Panc1 (cell line): ENCODE measurements at regions of chr15 and their contacts with region 1.

Region 1: GRCh38 chr15:93900476-93901400 is 330.6 kb upstream of the MCTP2 start:
- DNase-seq: no peak
- ATAC-seq: no peak
- H3K4me3 ChIP-seq: no peak overlapping the region
- H3K27ac ChIP-seq: no peak overlapping the region
- H3K4me1 ChIP-seq: no peaks in the 10 kb centered on the region
- H3K27me3 ChIP-seq: no peaks in the 10 kb centered on the region
- CTCF ChIP-seq: no peak

Region 2: GRCh38 chr15:93730724-93731123 is 170.0 kb before region 1 on chr15:
- CTCF ChIA-PET with region 1: no interaction called
- POLR2A ChIA-PET with region 1: no interaction called
- in situ Hi-C with region 1: no loop called
- intact Hi-C with region 1: no loop called
- DNase-seq: no peak
- ATAC-seq: no peak
- H3K4me3 ChIP-seq: no peak overlapping the region
- H3K27ac ChIP-seq: no peak overlapping the region
- H3K4me1 ChIP-seq: no peaks in the 10 kb centered on the region
- H3K27me3 ChIP-seq: no peaks in the 10 kb centered on the region
- CTCF ChIP-seq: no peak

Region 3: DNA sequence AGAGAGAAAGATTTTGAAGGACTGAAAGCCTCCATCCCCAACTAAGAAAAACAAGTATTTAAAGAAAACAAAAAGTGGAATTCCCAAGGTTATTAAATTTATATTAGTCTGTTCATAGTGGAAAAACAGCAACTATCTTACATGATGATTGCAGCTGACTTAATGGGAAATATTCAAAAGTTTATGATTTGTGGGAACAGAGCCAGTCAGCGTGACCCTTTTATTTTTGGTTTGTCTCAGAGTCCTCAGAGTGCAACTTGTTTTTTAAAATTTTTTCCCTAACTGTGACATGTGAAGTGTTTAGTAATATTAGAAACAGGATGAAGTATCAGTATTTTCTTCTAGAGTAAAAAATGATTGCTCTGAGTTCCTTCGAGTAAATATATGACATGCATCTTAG is 111.3 kb before region 1 on chr15:
- CTCF ChIA-PET with region 1: no interaction called
- POLR2A ChIA-PET with region 1: interaction called, 14 read pairs
- in situ Hi-C with region 1: no loop called
- intact Hi-C with region 1: no loop called
- DNase-seq: no peak
- ATAC-seq: no peak
- H3K4me3 ChIP-seq: no peak overlapping the region
- H3K27ac ChIP-seq: no peak overlapping the region
- H3K4me1 ChIP-seq: no peaks in the 10 kb centered on the region
- H3K27me3 ChIP-seq: no peaks in the 10 kb centered on the region
- CTCF ChIP-seq: no peak

Region 4: DNA sequence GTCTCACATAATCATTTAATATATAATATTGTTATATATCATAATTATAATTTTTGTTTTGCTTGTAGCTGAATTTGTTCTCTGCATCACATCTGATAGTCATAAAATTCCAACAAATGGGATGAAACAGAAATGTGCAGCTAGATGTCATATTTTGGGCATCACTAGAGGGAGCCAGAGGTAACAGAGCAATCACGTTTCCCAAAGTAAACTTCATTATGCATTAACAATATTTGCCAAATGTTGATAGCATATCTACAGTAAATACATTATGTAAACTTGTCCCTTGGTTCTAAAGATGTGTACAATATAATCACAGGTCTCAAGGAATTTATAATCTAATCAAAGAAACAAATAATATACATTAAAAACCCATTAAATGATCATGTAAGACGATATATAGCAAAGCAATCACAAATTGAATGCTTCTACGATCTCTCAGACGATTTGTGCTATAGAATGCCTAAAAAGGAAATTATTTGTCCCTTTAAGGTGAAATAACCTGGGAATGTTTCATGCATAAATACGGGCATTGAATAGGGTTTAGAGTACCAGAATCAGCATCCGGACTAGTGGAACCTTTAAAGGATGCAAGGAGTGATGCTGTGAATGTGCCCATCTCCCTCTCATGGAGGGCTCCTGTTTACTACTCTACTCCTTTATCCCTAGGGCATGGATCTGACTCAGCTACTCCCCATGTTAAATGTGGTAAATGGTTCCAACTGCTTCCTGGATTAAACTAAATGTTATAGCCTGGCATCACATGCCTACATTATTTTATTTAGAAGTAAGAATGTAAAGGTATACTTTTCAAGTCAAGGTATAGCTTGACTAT is 96.6 kb after region 1 on chr15:
- CTCF ChIA-PET with region 1: no interaction called
- POLR2A ChIA-PET with region 1: no interaction called
- in situ Hi-C with region 1: no loop called
- intact Hi-C with region 1: no loop called
- DNase-seq: peak; percentile 5
- ATAC-seq: no peak
- H3K4me3 ChIP-seq: no peak overlapping the region
- H3K27ac ChIP-seq: no peak overlapping the region
- H3K4me1 ChIP-seq: no peaks in the 10 kb centered on the region
- H3K27me3 ChIP-seq: no peaks in the 10 kb centered on the region
- CTCF ChIP-seq: peak; percentile 72; the same call in 1 of the 2 replicates

Region 5: GRCh38 chr15:94653071-94653470 is 752.3 kb after region 1 on chr15:
- CTCF ChIA-PET with region 1: no interaction called
- POLR2A ChIA-PET with region 1: interaction called, 15 read pairs
- in situ Hi-C with region 1: no loop called
- intact Hi-C with region 1: no loop called
- DNase-seq: no peak
- ATAC-seq: no peak
- H3K4me3 ChIP-seq: no peak overlapping the region
- H3K27ac ChIP-seq: no peak overlapping the region
- H3K4me1 ChIP-seq: no peaks in the 10 kb centered on the region
- H3K27me3 ChIP-seq: peaks cover 7% of the 10 kb centered on the region; the same call in 1 of the 2 replicates
- CTCF ChIP-seq: no peak